Caco-2 (cell line): ENCODE measurements at regions of chrX and their contacts with region 1.

Region 1: DNA sequence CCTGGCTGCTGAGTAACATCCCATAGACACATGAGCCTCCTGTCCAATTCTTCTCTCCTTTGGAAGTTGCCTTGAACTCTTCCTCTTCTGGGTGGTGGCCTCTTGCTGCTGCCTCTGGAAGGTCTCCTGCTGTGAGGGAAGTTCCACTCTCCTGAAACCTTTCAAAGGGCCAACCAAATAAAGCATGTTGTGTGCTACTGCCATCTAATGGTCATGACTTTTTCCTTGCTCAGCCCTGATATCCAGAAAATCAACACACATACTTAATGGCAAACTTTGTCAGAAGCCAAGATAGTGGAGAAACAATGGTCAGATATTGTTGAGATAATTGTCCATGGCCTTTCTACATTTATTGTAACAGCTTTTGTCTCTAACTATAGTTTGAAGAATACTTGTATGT is 19.1 kb upstream of the ZXDA start:
- DNase-seq: peak in 1 of 2 experiments; percentile 7
- H3K4me3 ChIP-seq: no peak overlapping the region
- H3K4me3 Mint-ChIP-seq: no peak overlapping the region
- H3K27ac Mint-ChIP-seq: no peak overlapping the region
- H3K4me1 ChIP-seq: no peaks in the 10 kb centered on the region
- H3K4me1 Mint-ChIP-seq: no peaks in the 10 kb centered on the region
- H3K27me3 ChIP-seq: no peaks in the 10 kb centered on the region
- H3K27me3 Mint-ChIP-seq: no peaks in the 10 kb centered on the region
- CTCF ChIP-seq: peak; percentile 19 to 28

Region 2: DNA sequence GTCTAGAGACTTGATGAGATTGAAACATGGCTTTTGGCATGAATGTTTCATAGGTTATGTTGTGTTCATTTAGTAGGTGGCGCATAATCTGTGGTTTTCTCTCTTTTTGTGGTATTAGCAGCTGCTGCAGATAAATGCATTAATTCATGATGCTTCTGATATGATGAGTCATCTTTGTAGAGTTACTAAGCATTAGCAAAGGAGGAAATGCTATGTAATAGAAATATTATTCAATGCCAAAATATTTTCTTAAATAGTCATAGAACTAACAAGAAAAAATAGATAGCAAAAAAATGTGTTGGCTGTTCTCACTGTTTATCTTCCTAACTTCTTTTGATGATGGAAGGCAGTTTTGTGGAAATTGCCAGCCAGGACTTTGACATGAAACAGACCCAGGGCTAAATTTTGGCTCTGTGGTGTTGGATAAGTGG is 334.0 kb before region 1 on chrX:
- CTCF ChIA-PET with region 1: no interaction called
- POLR2A ChIA-PET with region 1: no interaction called
- intact Hi-C with region 1: loop called (anchors 10 kb)
- DNase-seq: no peak
- H3K4me3 ChIP-seq: no peak overlapping the region
- H3K4me3 Mint-ChIP-seq: peak overlapping the region; percentile 57
- H3K27ac Mint-ChIP-seq: no peak overlapping the region
- H3K4me1 ChIP-seq: no peaks in the 10 kb centered on the region
- H3K4me1 Mint-ChIP-seq: peaks cover 12% of the 10 kb centered on the region
- H3K27me3 ChIP-seq: no peaks in the 10 kb centered on the region
- H3K27me3 Mint-ChIP-seq: no peaks in the 10 kb centered on the region
- CTCF ChIP-seq: no peak